PC-3 (cell line): ENCODE measurements at regions of chr4 and their contacts with region 1.

Region 1: GRCh38 chr4:165131247-165131832 is 18.7 kb upstream of the TMEM192 start:
- DNase-seq: peak; percentile 86
- ATAC-seq: peak; percentile 73
- H3K4me3 ChIP-seq: 0 out of 2 replicates have a peak overlapping the region, but pooled peaks have one; percentile 7
- H3K27ac ChIP-seq: no peak overlapping the region
- H3K4me1 ChIP-seq: no peaks in the 10 kb centered on the region
- H3K27me3 ChIP-seq: no peaks in the 10 kb centered on the region
- CTCF ChIP-seq: peak; percentile 92

Region 2: GRCh38 chr4:165112368-165113139 is 18.8 kb before region 1 on chr4 and contains the start of gene TMEM192:
- CTCF ChIA-PET with region 1: interaction called, 14 read pairs
- POLR2A ChIA-PET with region 1: no interaction called
- intact Hi-C with region 1: no loop called
- DNase-seq: peak; percentile 84
- ATAC-seq: peak; percentile 96
- H3K4me3 ChIP-seq: peak within 1 kb of the TSS; percentile 95
- H3K27ac ChIP-seq: 0 out of 2 replicates have a peak within 1 kb of the TSS, but pooled peaks have one; percentile 7
- H3K4me1 ChIP-seq: 0 out of 2 replicates have a peak, but pooled peaks cover 5% of the 10 kb centered on the region
- H3K27me3 ChIP-seq: no peaks in the 10 kb centered on the region
- CTCF ChIP-seq: peak; percentile 28
- total RNA-seq, gene TMEM192: 6.8 and 7.4 TPM in 2 replicates

Region 3: GRCh38 chr4:165207431-165208220 is 76.3 kb after region 1 on chr4 and contains the start of gene KLHL2:
- CTCF ChIA-PET with region 1: interaction called, 3 read pairs
- POLR2A ChIA-PET with region 1: no interaction called
- intact Hi-C with region 1: loop called (anchors 5 kb)
- DNase-seq: peak; percentile 65
- ATAC-seq: peak; percentile 62
- H3K4me3 ChIP-seq: peak within 1 kb of the TSS; percentile 95
- H3K27ac ChIP-seq: no peak within 1 kb of the TSS
- H3K4me1 ChIP-seq: peaks cover 61% of the 10 kb centered on the region
- H3K27me3 ChIP-seq: no peaks in the 10 kb centered on the region
- CTCF ChIP-seq: no peak
- total RNA-seq, gene KLHL2: 10.0 and 11.0 TPM in 2 replicates

Region 4: DNA sequence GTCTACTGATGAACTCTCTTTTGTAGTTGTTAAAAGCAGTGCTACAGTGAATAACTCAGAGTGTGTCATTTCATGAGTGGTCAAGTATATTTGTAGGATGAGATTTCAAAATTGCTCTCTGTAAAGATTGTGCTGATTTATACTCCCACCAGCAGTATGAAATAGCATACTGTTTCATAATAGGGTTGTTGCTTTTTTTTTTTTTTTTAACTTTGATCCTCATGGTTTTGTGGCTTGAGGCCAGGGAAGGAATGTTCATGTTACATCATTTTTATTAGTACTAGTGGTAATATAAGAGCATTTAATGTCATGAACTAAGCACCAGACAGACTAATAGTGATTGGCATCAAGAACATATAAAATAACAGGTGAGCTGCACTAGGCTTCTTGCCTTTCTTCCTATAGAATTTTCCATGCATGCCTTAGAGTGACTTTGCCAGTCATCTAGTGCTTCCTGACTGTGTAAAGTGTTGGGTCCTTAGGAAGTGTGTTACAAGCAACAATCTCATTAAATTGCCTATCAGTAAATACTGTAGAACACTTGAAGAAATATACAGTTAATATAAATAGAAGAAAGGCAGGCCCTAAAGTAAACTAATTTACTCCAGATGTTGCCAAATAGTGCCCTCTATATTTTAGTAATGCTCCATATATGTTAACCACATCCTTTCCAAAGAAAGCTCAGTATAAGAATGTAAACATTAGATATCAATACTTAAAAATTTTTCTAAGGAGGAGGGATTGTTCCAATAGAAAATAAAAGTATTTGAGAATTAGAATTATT is 157.5 kb after region 1 on chr4:
- CTCF ChIA-PET with region 1: no interaction called
- POLR2A ChIA-PET with region 1: no interaction called
- intact Hi-C with region 1: loop called (anchors 10 kb)
- DNase-seq: peak; percentile 28
- ATAC-seq: peak; percentile 42
- H3K4me3 ChIP-seq: no peak overlapping the region
- H3K27ac ChIP-seq: no peak overlapping the region
- H3K4me1 ChIP-seq: peaks cover 13% of the 10 kb centered on the region
- H3K27me3 ChIP-seq: no peaks in the 10 kb centered on the region
- CTCF ChIP-seq: no peak

Region 5: DNA sequence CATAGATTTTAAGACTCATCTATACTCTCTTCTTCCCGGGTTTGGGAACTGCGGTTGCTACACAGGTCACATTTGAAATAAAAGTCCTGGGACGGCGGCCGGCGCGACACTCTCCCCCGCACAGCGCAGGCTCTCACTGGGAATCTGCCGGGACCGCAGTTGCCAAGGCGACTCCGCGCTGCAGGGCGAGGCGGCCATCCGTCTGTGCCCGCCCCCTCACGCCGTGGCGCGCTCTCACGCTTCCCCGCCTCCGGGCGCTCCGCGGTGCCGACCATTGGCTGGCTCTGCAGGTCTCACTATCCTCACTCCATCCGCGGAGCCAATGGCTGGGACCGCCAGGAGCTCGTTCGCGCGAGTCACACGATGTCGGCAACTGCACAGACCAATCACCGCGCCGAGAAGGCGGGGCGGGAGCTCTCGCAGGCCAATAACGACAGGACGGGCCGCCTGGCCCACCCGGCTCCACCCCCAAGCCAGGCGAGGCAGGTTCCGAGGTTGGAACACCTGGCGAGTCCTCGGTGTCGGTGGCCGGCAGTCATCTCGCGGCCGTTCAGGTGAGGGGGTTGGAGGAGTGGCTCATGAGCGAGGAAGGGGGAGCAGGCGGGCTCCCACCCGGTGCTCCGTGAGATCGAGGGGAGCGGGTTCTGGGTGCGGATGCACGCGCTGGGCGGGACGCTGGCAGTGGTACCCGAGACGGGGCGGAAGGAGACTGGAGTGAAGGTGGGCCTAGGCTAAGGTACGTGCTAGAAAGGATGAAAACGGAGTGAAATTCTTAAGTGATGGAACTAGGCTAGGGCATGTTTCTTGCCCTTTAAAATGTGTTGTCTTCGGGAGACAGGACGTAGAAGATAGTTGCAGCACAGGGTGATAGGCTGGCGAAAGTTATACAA is 196.1 kb after region 1 on chr4 and contains the start of gene MSMO1:
- CTCF ChIA-PET with region 1: interaction called, 5 read pairs
- POLR2A ChIA-PET with region 1: no interaction called
- intact Hi-C with region 1: loop called (anchors 5 kb)
- DNase-seq: peak; percentile 98
- ATAC-seq: peak; percentile 97
- H3K4me3 ChIP-seq: peak within 1 kb of the TSS; percentile 96
- H3K27ac ChIP-seq: peak within 1 kb of the TSS; percentile 73
- H3K4me1 ChIP-seq: peaks cover 17% of the 10 kb centered on the region
- H3K27me3 ChIP-seq: no peaks in the 10 kb centered on the region
- CTCF ChIP-seq: no peak
- total RNA-seq, gene MSMO1: 30.5 and 37.6 TPM in 2 replicates

Region 6: DNA sequence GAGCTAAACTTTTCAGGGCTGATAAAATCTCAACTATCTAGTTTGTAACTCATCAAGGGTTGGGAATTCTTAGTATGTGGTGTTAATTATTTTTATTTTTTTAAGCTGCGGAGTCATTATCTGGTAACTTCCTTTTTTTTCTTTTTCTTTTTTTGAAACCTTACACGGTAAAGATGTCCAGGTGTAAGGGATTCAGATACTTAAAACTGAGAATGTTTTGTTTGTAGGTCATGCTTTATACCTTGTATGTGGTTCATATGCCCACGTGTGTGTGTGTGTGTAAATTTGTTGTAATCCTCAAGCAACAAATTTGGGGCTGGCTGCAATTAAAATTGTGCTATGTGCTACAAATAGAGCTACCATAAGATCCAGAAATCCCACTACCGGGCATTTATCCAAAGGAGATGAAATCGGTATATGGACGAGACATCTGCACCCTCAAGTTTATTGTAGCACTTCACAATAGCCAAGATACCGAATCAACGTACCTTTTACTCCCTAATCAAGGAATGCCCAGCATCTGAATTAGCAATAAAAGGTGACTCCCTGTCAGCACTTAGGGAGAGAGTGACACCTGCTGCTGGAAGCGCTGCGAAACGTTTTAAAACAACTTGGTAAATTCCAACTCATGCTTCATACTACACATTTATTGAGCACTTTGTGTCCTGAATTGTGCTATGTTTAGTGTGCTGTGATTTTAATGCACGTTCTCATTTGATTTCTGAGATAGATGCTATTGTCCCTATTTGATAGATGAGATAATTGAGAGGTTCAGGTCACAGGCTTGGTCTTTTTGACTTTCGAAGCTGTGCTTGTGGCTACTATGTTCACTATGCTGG is 212.2 kb after region 1 on chr4:
- CTCF ChIA-PET with region 1: interaction called, 11 read pairs
- POLR2A ChIA-PET with region 1: no interaction called
- intact Hi-C with region 1: loop called (anchors 1 kb)
- DNase-seq: peak; percentile 55
- ATAC-seq: peak; percentile 63
- H3K4me3 ChIP-seq: no peak overlapping the region
- H3K27ac ChIP-seq: no peak overlapping the region
- H3K4me1 ChIP-seq: no peaks in the 10 kb centered on the region
- H3K27me3 ChIP-seq: no peaks in the 10 kb centered on the region
- CTCF ChIP-seq: peak; percentile 70

Region 7: GRCh38 chr4:165464813-165465381 is 333.6 kb after region 1 on chr4:
- CTCF ChIA-PET with region 1: no interaction called
- POLR2A ChIA-PET with region 1: no interaction called
- intact Hi-C with region 1: loop called (anchors 2 kb)
- DNase-seq: peak; percentile 51
- ATAC-seq: peak; percentile 54
- H3K4me3 ChIP-seq: peak overlapping the region; percentile 53; the same call in 1 of the 2 replicates
- H3K27ac ChIP-seq: no peak overlapping the region
- H3K4me1 ChIP-seq: no peaks in the 10 kb centered on the region
- H3K27me3 ChIP-seq: no peaks in the 10 kb centered on the region
- CTCF ChIP-seq: peak; percentile 75